Keratinocyte (primary cell): ENCODE measurements at regions of chr17 and their contacts with region 1.

Region 1: GRCh38 chr17:49501504-49501903 is 6.4 kb downstream of the NGFR start:
- DNase-seq: no peak
- H3K4me3 ChIP-seq: no peak overlapping the region
- H3K27ac ChIP-seq: no peak overlapping the region
- H3K4me1 ChIP-seq: peaks cover 23% of the 10 kb centered on the region
- H3K27me3 ChIP-seq: peaks cover 14% of the 10 kb centered on the region
- CTCF ChIP-seq: no peak

Region 2: GRCh38 chr17:49434821-49435670 is 66.5 kb before region 1 on chr17:
- dilution Hi-C with region 1: loop called (anchors 5 kb)
- DNase-seq: peak; percentile 38
- H3K4me3 ChIP-seq: no peak overlapping the region
- H3K27ac ChIP-seq: no peak overlapping the region
- H3K4me1 ChIP-seq: peaks cover 3% of the 10 kb centered on the region
- H3K27me3 ChIP-seq: peaks cover 38% of the 10 kb centered on the region
- CTCF ChIP-seq: peak; percentile 59 to 88 (median 87)

Region 3: GRCh38 chr17:49445591-49445990 is 55.9 kb before region 1 on chr17:
- dilution Hi-C with region 1: no loop called
- DNase-seq: no peak
- H3K4me3 ChIP-seq: no peak overlapping the region
- H3K27ac ChIP-seq: no peak overlapping the region
- H3K4me1 ChIP-seq: peaks cover 17% of the 10 kb centered on the region
- H3K27me3 ChIP-seq: peaks cover 32% of the 10 kb centered on the region
- CTCF ChIP-seq: no peak

Region 4: GRCh38 chr17:49557312-49558024 is 56.0 kb after region 1 on chr17:
- dilution Hi-C with region 1: no loop called
- DNase-seq: no peak
- H3K4me3 ChIP-seq: no peak overlapping the region
- H3K27ac ChIP-seq: no peak overlapping the region
- H3K4me1 ChIP-seq: peaks cover 10% of the 10 kb centered on the region
- H3K27me3 ChIP-seq: peaks cover 4% of the 10 kb centered on the region
- CTCF ChIP-seq: peak; percentile 76 to 78 (median 77)

Region 5: GRCh38 chr17:49585422-49586027 is 84.0 kb after region 1 on chr17:
- dilution Hi-C with region 1: no loop called
- DNase-seq: no peak
- H3K4me3 ChIP-seq: no peak overlapping the region
- H3K27ac ChIP-seq: no peak overlapping the region
- H3K4me1 ChIP-seq: peaks cover 9% of the 10 kb centered on the region
- H3K27me3 ChIP-seq: no peaks in the 10 kb centered on the region
- CTCF ChIP-seq: peak in 2 of 3 experiments; percentile 4 to 30